PC-3 (cell line): ENCODE measurements at regions of chr5 and their contacts with region 1.

Region 1: GRCh38 chr5:63822614-63823013 is 139.6 kb downstream of the HTR1A start:
- DNase-seq: peak; percentile 28
- ATAC-seq: peak; percentile 92
- H3K4me3 ChIP-seq: no peak overlapping the region
- H3K27ac ChIP-seq: no peak overlapping the region
- H3K4me1 ChIP-seq: no peaks in the 10 kb centered on the region
- H3K27me3 ChIP-seq: no peaks in the 10 kb centered on the region
- CTCF ChIP-seq: 0 out of 2 replicates have a peak, but pooled peaks have one; percentile 31

Region 2: GRCh38 chr5:62742207-62742606 is 1080.4 kb before region 1 on chr5:
- CTCF ChIA-PET with region 1: no interaction called
- POLR2A ChIA-PET with region 1: no interaction called
- intact Hi-C with region 1: no loop called
- DNase-seq: no peak
- ATAC-seq: no peak
- H3K4me3 ChIP-seq: no peak overlapping the region
- H3K27ac ChIP-seq: no peak overlapping the region
- H3K4me1 ChIP-seq: no peaks in the 10 kb centered on the region
- H3K27me3 ChIP-seq: no peaks in the 10 kb centered on the region; the same call in 1 of the 2 replicates
- CTCF ChIP-seq: no peak

Region 3: DNA sequence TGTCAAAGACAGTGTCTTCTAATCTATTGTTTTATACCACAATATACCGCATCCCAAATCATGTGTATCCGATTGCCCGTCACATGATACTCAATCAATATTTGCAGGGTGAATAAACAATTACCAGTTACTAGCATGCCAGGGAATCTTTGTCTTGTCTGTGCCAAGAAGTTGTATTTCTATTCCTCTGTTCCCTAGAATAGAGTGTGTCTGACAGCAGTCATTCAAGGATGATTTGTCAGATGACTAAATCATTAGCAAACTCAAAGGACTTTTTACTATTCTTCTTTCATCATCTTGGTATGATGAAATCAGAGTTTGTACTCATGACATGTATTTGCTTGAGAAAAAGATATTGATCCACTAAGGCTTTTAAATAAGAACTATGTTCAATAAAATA is 209.2 kb before region 1 on chr5:
- CTCF ChIA-PET with region 1: no interaction called
- POLR2A ChIA-PET with region 1: no interaction called
- intact Hi-C with region 1: loop called (anchors 2 kb)
- DNase-seq: peak; percentile 56
- ATAC-seq: peak; percentile 66
- H3K4me3 ChIP-seq: no peak overlapping the region
- H3K27ac ChIP-seq: no peak overlapping the region
- H3K4me1 ChIP-seq: no peaks in the 10 kb centered on the region; the same call in 1 of the 2 replicates
- H3K27me3 ChIP-seq: no peaks in the 10 kb centered on the region
- CTCF ChIP-seq: no peak

Region 4: GRCh38 chr5:63963080-63963735 is 140.6 kb after region 1 on chr5:
- CTCF ChIA-PET with region 1: no interaction called
- POLR2A ChIA-PET with region 1: no interaction called
- intact Hi-C with region 1: loop called (anchors 2 kb)
- DNase-seq: peak; percentile 74
- ATAC-seq: peak; percentile 66
- H3K4me3 ChIP-seq: no peak overlapping the region
- H3K27ac ChIP-seq: no peak overlapping the region
- H3K4me1 ChIP-seq: no peaks in the 10 kb centered on the region
- H3K27me3 ChIP-seq: peaks cover 18% of the 10 kb centered on the region; the same call in 1 of the 2 replicates
- CTCF ChIP-seq: peak; percentile 84

Region 5: DNA sequence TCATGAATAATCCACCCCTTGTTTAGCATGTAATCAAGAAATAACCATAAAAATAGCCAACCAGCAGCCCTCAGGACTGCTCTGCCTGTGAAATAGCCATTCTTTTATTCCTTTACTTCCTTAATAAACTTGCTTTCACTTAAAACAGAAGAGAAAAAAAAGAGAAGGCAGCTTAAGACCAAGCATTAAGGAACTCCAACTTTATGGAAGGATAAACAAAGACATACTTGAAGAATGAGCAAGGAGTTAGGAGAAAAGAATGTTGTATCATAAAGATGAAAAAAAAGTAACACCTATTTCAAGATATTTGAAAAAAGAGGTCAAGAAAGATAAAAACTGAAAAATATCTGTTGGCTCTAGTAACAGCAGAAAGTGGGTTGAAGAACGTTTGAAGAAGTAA is 450.7 kb after region 1 on chr5:
- CTCF ChIA-PET with region 1: no interaction called
- POLR2A ChIA-PET with region 1: no interaction called
- intact Hi-C with region 1: no loop called
- DNase-seq: no peak
- ATAC-seq: no peak
- H3K4me3 ChIP-seq: no peak overlapping the region
- H3K27ac ChIP-seq: no peak overlapping the region
- H3K4me1 ChIP-seq: no peaks in the 10 kb centered on the region
- H3K27me3 ChIP-seq: no peaks in the 10 kb centered on the region
- CTCF ChIP-seq: no peak